Activated B cell treated with CpG ODN at 0.5 μM for 24 hours (primary cell): ENCODE measurements at regions of chr6 and their contacts with region 1.

Region 1: GRCh38 chr6:157521362-157522335 is 140.7 kb downstream of the ZDHHC14 start:
- DNase-seq: no peak
- ATAC-seq: no peak
- H3K4me3 Mint-ChIP-seq: no peak overlapping the region
- H3K27ac Mint-ChIP-seq: no peak overlapping the region
- H3K4me1 Mint-ChIP-seq: peaks cover 21% of the 10 kb centered on the region
- H3K27me3 Mint-ChIP-seq: no peaks in the 10 kb centered on the region
- CTCF ChIP-seq: no peak

Region 2: GRCh38 chr6:157535339-157536222 is 13.9 kb after region 1 on chr6:
- CTCF ChIA-PET with region 1: no interaction called
- POLR2A ChIA-PET with region 1: interaction called, 3 read pairs
- intact Hi-C with region 1: loop called (anchors 2 kb)
- DNase-seq: no peak
- ATAC-seq: peak; percentile 45
- H3K4me3 Mint-ChIP-seq: peak overlapping the region; percentile 21
- H3K27ac Mint-ChIP-seq: peak overlapping the region; percentile 70
- H3K4me1 Mint-ChIP-seq: peaks cover 60% of the 10 kb centered on the region
- H3K27me3 Mint-ChIP-seq: no peaks in the 10 kb centered on the region
- CTCF ChIP-seq: no peak